ENCODE measurements at regions of chr2 and their contacts with region 1.

Region 1: GRCh38 chr2:215394102-215394805 is 41.6 kb downstream of the FN1 start:
- DNase-seq: no peak
- H3K4me3 ChIP-seq: no peak overlapping the region
- H3K27ac ChIP-seq: no peak overlapping the region
- H3K4me1 ChIP-seq: no peaks in the 10 kb centered on the region
- H3K27me3 ChIP-seq: no peaks in the 10 kb centered on the region
- CTCF ChIP-seq: no peak
- POLR2A ChIP-seq: no peak

Region 2: DNA sequence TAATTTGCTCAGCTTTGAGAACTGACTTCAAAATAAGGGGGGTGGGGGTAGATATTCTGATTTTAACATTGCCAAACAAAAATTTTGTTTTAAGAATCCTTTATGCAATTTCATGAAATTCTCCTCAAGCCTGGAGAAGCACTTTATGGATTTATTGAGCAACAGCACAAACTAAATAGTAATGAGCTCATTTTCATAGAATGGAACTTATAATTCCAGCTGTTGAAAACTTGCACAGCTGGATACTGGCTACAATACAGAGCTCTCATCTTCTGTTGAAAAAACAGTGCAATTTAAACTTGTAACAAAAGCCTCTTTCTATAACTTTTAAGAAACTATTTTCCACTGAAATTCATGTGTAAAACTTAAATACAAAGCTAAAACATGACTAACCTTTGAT is 179.2 kb after region 1 on chr2:
- intact Hi-C with region 1: no loop called
- DNase-seq: no peak
- H3K4me3 ChIP-seq: no peak overlapping the region
- H3K27ac ChIP-seq: no peak overlapping the region
- H3K4me1 ChIP-seq: no peaks in the 10 kb centered on the region
- H3K27me3 ChIP-seq: no peaks in the 10 kb centered on the region
- CTCF ChIP-seq: no peak
- POLR2A ChIP-seq: no peak

Region 3: DNA sequence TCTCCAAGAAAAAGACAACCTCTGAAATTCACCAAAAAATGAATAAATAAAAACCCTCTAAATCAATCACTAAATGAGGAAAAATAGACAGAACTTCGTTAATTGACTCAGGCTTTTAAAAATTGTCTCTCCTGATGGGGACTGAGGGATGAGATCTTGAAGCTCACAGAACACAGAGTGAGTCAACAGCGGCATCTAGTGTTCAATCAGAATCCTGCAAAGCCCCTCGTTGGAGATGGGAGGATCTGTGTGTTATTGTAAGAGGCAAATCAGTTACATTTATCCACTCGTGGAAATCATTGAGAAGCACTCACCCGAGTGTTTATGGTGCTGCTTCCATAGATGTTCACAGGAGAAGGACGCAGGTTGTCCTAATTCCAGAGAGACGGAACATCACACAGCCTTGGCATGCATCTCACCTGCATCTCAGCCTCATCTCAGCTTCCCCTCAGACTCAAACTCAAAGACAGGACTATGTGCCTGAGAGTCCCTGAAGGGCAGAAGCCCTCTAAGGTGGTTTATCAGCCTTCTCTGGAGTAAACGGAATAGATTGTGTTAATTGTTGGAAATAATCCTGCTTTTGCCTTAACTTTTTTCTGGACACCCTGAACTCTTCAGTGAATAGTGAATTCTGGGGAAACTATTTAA is 537.1 kb after region 1 on chr2:
- intact Hi-C with region 1: loop called (anchors 2 kb)
- DNase-seq: no peak
- H3K4me3 ChIP-seq: no peak overlapping the region
- H3K27ac ChIP-seq: no peak overlapping the region
- H3K4me1 ChIP-seq: no peaks in the 10 kb centered on the region
- H3K27me3 ChIP-seq: no peaks in the 10 kb centered on the region
- CTCF ChIP-seq: peak; percentile 23 to 71 (median 69)
- POLR2A ChIP-seq: no peak